CD8-positive, alpha-beta T cell (primary cell): ENCODE measurements at regions of chrX and their contacts with region 1.

Region 1: DNA sequence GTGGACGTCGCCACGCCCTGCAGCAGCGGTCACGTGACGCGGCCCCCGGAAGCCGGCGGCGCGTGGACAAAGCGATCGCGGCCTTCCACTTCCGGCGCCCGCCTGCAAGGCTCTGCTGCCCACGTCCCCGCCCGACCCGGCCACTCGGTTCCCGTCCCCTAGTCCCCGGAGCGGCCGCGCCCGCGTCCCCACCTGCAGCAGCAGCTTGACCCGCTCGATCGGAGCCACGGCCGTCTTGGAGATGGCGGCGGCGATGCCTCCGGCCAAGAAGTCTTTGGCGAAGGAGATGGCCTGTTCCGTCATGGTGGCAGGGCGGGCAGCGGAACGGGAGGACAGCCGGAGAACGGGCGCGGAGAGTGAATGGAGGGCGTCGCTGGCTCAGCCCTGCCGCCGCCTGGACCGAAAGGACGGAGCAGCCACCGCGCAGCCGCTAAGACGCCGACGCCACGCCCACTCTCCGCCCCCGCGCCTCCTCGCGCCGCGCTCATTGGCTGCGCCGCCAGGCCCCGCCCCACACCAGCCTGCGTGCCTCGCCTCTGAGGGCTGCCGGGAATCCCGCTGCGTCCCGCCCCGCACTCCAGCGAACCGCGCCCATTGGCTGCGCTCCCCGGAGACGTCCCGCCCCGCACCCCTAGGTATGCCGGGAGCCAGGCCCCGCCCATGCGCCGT is at the start of gene SLC25A6:
- DNase-seq: peak; percentile 99 to 100 (median 99)
- ATAC-seq: peak; percentile 95
- H3K4me3 ChIP-seq: peak within 1 kb of the TSS; percentile 99
- H3K4me3 Mint-ChIP-seq: peak within 1 kb of the TSS; percentile 90
- H3K27ac ChIP-seq: peak within 1 kb of the TSS; percentile 96 to 98
- H3K27ac Mint-ChIP-seq: peak within 1 kb of the TSS; percentile 92
- H3K4me1 ChIP-seq: peaks cover 44% of the 10 kb centered on the region
- H3K4me1 Mint-ChIP-seq: peaks cover 47% of the 10 kb centered on the region
- H3K27me3 ChIP-seq: no peaks in the 10 kb centered on the region
- H3K27me3 Mint-ChIP-seq: no peaks in the 10 kb centered on the region
- CTCF ChIP-seq: no peak
- total RNA-seq, gene SLC25A6: 382 to 404 TPM

Region 2: DNA sequence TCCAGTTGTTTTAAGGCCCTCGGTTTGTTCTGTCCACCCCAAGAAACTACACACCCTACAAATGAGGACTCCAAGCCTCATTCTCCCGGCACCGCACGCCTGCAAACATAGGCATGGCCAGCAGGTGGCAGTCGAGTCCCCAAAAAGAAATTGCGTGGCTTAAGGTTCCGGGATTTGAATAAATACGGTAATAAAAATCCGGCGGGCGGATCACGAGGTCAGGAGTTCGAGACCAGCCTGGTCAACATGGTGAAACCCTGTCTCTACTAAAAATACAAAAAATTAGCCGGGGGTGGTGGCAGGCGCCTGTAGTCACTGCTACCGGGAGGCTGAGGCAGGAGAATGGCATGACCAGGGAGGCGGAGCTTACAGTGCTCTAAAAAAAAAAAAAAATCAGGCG is 145.0 kb before region 1 on chrX:
- CTCF ChIA-PET with region 1: no interaction called
- POLR2A ChIA-PET with region 1: no interaction called
- intact Hi-C with region 1: loop called in 1 of 2 experiments (anchors 1 kb)
- DNase-seq: peak; percentile 59 to 89 (median 74)
- ATAC-seq: peak; percentile 67
- H3K4me3 ChIP-seq: no peak overlapping the region
- H3K4me3 Mint-ChIP-seq: no peak overlapping the region
- H3K27ac ChIP-seq: no peak overlapping the region
- H3K27ac Mint-ChIP-seq: peak overlapping the region; percentile 27
- H3K4me1 ChIP-seq: peaks cover 16% of the 10 kb centered on the region
- H3K4me1 Mint-ChIP-seq: peaks cover 15% of the 10 kb centered on the region
- H3K27me3 ChIP-seq: no peaks in the 10 kb centered on the region
- H3K27me3 Mint-ChIP-seq: no peaks in the 10 kb centered on the region
- CTCF ChIP-seq: peak; percentile 75

Region 3: DNA sequence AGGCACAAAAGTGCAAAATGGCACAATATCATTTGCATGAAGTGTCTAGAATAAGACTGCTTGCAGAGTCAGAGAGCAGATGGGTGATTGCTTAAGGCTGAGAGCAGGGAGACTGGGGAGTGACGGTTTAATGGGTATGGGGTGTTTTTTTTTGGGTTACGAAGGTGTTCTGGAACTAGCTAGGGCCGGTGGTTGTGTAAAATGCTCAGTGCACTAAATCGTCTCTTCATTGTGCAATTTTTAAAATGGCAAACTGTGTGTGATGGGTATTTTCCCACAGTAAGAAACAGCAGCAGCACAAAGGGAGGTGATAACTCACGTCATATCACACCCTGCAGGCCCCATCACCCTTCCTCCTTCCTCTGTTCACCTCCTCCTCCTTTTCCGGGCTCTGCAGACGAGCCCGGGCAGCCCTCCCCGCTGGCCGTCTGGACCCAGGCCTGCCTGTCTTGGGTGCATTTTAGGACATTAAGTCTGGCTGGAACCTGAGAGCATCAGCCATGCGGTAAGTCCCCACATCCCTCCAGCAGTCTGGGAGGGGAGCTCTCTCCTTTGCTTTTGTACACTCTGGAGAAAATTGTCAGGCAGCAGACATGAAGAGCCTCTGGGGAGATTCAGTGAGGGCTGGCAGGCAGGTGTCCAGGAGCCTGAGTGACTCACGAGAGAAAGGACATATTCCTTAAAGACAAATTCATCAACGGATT is 265.7 kb after region 1 on chrX:
- CTCF ChIA-PET with region 1: no interaction called
- POLR2A ChIA-PET with region 1: no interaction called
- intact Hi-C with region 1: loop called in 1 of 2 experiments (anchors 1 kb)
- DNase-seq: peak; percentile 10 to 94 (median 63)
- ATAC-seq: peak; percentile 31
- H3K4me3 ChIP-seq: peak overlapping the region; percentile 46 to 69
- H3K4me3 Mint-ChIP-seq: peak overlapping the region; percentile 98
- H3K27ac ChIP-seq: peak overlapping the region; percentile 78 to 98
- H3K27ac Mint-ChIP-seq: peak overlapping the region; percentile 98
- H3K4me1 ChIP-seq: peaks cover 18% of the 10 kb centered on the region
- H3K4me1 Mint-ChIP-seq: peaks cover 39% of the 10 kb centered on the region
- H3K27me3 ChIP-seq: no peaks in the 10 kb centered on the region
- H3K27me3 Mint-ChIP-seq: no peaks in the 10 kb centered on the region
- CTCF ChIP-seq: no peak

Region 4: DNA sequence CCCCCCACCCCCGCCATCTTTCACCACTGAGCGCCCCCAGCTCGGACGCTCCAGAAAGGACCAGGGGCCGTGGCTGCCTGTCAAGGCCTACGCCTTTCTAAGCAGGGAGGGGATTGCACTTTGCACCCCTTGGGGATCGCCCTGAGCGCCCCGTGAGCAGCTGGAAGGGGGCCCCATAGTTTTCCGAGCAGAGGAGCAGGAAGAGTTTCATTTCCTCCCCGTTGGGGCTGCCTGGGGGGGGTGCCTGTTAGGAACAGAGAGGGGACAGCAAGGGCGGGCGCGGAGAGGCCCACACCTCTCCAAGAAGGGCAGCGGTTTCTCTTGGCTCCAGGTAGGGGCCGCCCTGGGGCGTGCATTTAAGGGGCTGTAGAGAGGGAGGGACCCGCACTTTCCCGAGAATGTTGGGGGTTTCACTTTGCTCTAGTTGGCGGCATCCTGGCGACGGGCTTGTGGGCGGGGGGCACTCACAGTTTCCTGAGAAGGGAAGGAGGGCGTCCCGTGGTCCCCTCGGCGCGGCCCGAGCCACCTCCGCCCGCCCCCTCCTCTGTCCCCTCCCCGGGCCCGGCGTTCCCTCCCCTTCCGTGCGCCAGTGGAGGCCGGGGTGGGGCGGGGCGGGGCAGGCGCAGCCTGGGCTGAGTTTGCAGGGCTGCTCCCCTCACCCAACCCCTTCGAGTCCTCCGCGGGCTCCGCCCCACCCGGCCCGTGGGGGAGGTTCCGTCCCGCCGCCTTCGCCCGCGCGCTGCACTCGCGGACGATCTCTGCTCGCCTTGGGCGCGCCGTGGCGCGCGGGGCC is 1217.0 kb after region 1 on chrX:
- CTCF ChIA-PET with region 1: no interaction called
- POLR2A ChIA-PET with region 1: no interaction called
- intact Hi-C with region 1: loop called (anchors 1 kb)
- DNase-seq: peak; percentile 66 to 92 (median 85)
- ATAC-seq: peak; percentile 95
- H3K4me3 ChIP-seq: peak overlapping the region; percentile 88 to 93
- H3K4me3 Mint-ChIP-seq: peak overlapping the region; percentile 93
- H3K27ac ChIP-seq: peak overlapping the region; percentile 54 to 59
- H3K27ac Mint-ChIP-seq: peak overlapping the region; percentile 83
- H3K4me1 ChIP-seq: peaks cover 18% of the 10 kb centered on the region
- H3K4me1 Mint-ChIP-seq: peaks cover 46% of the 10 kb centered on the region
- H3K27me3 ChIP-seq: no peaks in the 10 kb centered on the region
- H3K27me3 Mint-ChIP-seq: no peaks in the 10 kb centered on the region
- CTCF ChIP-seq: no peak

Region 5: DNA sequence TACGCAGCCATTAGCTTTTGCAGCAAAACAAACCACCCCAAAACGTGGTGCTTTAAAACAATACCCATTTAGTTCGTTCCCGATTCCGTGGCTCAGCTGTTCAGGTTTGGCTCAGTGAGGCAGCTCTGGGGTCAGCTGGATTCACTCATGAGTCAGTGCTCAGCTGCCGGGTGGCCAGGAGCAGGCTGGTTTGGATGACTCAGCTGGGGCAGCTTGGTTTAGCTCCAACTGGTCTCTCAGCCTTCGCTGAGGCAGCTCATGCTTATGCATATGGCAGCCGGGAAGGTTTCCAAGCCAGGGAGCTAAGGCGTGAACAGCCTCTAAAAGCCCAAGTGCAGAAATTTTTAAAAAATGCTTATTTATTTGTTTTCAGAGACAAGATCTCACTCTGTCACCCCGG is 1285.9 kb after region 1 on chrX:
- CTCF ChIA-PET with region 1: no interaction called
- POLR2A ChIA-PET with region 1: no interaction called
- intact Hi-C with region 1: no loop called
- DNase-seq: no peak
- ATAC-seq: no peak
- H3K4me3 ChIP-seq: no peak overlapping the region
- H3K4me3 Mint-ChIP-seq: no peak overlapping the region
- H3K27ac ChIP-seq: no peak overlapping the region
- H3K27ac Mint-ChIP-seq: no peak overlapping the region
- H3K4me1 ChIP-seq: no peaks in the 10 kb centered on the region
- H3K4me1 Mint-ChIP-seq: no peaks in the 10 kb centered on the region
- H3K27me3 ChIP-seq: no peaks in the 10 kb centered on the region
- H3K27me3 Mint-ChIP-seq: no peaks in the 10 kb centered on the region
- CTCF ChIP-seq: no peak

Region 6: GRCh38 chrX:2690856-2691542 is 1299.2 kb after region 1 on chrX and contains the start of gene CD99:
- CTCF ChIA-PET with region 1: no interaction called
- POLR2A ChIA-PET with region 1: no interaction called
- intact Hi-C with region 1: loop called (anchors 1 to 5 kb)
- DNase-seq: peak; percentile 83 to 96 (median 89)
- ATAC-seq: peak; percentile 93
- H3K4me3 ChIP-seq: peak within 1 kb of the TSS; percentile 80 to 91
- H3K4me3 Mint-ChIP-seq: peak within 1 kb of the TSS; percentile 94
- H3K27ac ChIP-seq: peak within 1 kb of the TSS; percentile 70 to 71
- H3K27ac Mint-ChIP-seq: peak within 1 kb of the TSS; percentile 94
- H3K4me1 ChIP-seq: peaks cover 44% of the 10 kb centered on the region
- H3K4me1 Mint-ChIP-seq: peaks cover 37% of the 10 kb centered on the region
- H3K27me3 ChIP-seq: no peaks in the 10 kb centered on the region
- H3K27me3 Mint-ChIP-seq: no peaks in the 10 kb centered on the region
- CTCF ChIP-seq: no peak
- total RNA-seq, gene CD99: 114 to 120 TPM